GM18951 (cell line): ENCODE measurements at regions of chr1 and their contacts with region 1.

Region 1: DNA sequence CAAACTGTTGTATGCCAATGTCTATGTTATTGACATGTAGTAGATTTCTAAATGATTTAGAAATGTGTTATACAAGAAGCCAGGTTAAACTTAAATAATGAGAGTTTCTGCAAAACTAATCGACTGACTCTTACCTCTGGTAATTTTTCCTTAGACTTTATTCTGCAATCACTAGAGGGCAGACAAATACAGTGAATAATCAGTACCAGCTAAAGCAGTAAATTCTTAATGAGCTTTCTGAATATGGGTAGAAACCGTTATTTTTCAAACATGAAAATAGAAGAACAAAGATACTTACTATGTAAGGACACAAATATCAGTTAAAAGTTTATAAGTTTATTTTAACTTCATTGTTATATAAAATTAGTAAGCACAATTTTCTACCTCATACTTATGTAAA is 97.9 kb upstream of the RGS1 start:
- POLR2A ChIP-seq: no peak

Region 2: DNA sequence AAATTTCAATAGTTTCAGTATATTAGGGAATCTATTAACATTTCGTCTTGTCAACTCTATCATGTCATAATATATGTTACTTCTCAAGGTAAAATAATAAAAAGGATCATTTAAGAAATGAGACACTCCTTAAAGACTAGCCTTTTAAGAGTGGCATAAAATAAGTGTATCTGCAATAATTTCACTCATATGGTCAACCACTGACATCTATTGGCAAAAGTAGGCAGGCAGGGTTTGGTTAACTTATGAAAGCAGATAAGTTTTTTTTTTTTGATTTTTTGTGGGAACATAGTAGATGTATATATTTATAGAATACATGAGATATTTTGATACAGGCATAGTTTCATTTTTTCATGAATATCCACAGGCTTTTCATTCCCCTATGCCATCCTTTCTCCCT is 166.3 kb before region 1 on chr1:
- in situ Hi-C with region 1: no loop called
- POLR2A ChIP-seq: no peak

Region 3: DNA sequence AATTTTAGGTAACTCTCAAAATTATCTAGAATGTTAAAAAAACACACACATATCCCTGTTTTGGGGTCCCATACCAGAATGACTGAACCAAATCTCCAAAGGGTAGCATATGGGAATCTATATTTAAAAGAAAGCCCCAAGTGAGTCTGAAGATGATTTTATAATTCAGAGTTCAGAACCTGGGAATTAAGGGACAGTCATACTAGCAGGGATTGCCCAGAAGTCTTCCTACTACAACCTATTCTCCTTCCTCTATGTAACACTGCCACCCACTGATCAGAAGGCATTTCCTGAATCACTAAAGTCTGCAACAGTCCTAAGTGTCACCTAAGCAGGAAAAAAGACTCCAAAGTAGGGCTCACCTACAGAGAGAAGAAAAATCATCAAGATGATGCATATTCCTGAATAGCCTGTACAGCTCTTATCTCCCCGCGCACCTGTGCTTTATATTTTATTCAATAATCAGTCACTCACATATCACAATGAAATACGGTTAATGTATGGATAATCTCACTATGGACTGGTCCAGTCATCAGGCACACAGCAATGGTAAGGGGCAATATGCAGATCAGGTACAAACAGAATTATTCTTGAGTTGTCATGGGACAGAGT is 102.8 kb after region 1 on chr1:
- in situ Hi-C with region 1: loop called (anchors 10 kb)
- POLR2A ChIP-seq: peak; percentile 64

Region 4: GRCh38 chr1:192793983-192794767 is 316.5 kb after region 1 on chr1:
- in situ Hi-C with region 1: loop called (anchors 10 kb)
- POLR2A ChIP-seq: no peak

Region 5: DNA sequence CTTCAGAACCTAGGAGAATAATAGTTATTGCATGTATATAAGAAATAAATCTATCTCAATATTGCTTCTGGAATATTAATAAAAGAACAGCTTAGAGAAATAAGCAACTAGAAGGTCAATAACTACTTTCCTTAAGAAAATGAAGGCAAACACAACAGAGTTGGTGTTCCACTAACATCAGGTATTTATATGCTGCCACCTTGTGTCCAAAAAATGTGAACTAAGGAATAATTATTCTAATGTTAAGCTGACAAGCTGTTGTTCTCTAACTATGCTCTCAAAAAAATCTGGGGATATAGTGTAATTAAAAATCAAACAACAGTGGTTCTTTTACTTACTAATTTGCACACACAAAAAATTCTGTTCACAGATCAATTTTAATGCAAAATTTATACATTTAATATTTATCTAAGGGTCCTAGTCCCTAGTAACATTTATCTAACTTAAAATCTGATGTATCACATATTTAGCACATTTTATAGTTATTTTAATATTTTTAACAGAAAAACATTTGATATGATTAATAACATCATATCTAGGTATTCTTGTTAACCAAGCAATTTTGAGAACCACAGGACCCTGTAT is 541.9 kb after region 1 on chr1:
- in situ Hi-C with region 1: loop called (anchors 10 kb)
- POLR2A ChIP-seq: no peak